HCT116 (cell line): ENCODE measurements at regions of chr10 and their contacts with region 1.

Region 1: GRCh38 chr10:106175760-106176377 is 988.6 kb downstream of the SORCS1 start:
- DNase-seq: no peak
- ATAC-seq: no peak
- H3K4me3 ChIP-seq: no peak overlapping the region
- H3K27ac ChIP-seq: no peak overlapping the region
- H3K4me1 ChIP-seq: no peaks in the 10 kb centered on the region
- H3K27me3 ChIP-seq: no peaks in the 10 kb centered on the region
- CTCF ChIP-seq: peak in 2 of 3 experiments; percentile 32 to 50; a peak in 3 of 6 replicates
- POLR2A ChIP-seq: no peak
- RAD21 ChIP-seq: peak; percentile 46

Region 2: DNA sequence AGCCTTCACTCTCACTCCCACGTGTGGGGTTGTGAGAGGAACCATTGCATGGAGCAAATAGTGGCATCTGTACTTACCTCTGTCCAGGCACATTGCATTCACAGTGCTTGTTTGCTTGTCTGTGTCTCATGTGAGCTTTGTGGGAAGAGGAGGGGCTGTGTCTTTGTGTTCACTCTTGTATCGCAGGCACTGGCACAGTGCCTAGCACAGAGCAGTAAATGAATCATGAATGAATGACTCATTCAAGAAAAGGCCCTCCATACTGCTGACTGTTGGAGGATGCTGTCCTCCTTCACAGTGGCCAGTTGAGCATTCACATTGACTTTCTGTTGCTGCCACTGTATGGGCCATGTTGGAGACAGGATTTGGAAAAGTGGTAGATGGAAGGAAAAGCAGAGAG is 1409.5 kb before region 1 on chr10:
- CTCF ChIA-PET with region 1: no interaction called
- POLR2A ChIA-PET with region 1: no interaction called
- RAD21 ChIA-PET with region 1: no interaction called
- intact Hi-C with region 1: loop called (anchors 2 kb)
- DNase-seq: peak; percentile 67
- ATAC-seq: peak; percentile 90
- H3K4me3 ChIP-seq: no peak overlapping the region
- H3K27ac ChIP-seq: no peak overlapping the region
- H3K4me1 ChIP-seq: peaks cover 0 to 13% of the 10 kb centered on the region in 2 experiments; a peak in 2 of 4 replicates
- H3K27me3 ChIP-seq: peaks cover 45% of the 10 kb centered on the region
- CTCF ChIP-seq: no peak
- POLR2A ChIP-seq: no peak
- RAD21 ChIP-seq: no peak

Region 3: DNA sequence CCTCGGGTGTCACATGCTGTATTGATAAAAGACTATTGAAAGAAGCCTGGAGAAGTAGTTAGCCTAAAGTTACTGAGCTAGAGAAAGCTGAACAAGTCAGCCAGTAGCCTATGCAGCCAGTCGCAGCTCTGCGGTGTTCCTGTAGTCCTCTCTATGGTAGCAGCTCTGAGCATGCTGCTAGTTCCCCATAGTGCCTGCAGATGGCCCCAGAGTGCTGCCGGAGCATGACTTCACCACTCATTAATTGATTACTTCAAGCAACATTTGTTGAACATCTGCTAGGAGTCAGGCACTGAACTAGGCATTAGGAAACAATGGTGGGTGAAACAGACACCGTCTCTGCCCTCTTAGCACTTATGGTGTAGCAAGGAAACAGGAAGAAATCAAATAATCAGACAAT is 1112.1 kb before region 1 on chr10:
- CTCF ChIA-PET with region 1: no interaction called
- POLR2A ChIA-PET with region 1: no interaction called
- RAD21 ChIA-PET with region 1: no interaction called
- intact Hi-C with region 1: loop called (anchors 1 kb)
- DNase-seq: peak; percentile 2
- ATAC-seq: peak; percentile 86
- H3K4me3 ChIP-seq: no peak overlapping the region
- H3K27ac ChIP-seq: no peak overlapping the region
- H3K4me1 ChIP-seq: no peaks in the 10 kb centered on the region
- H3K27me3 ChIP-seq: peaks cover 6% of the 10 kb centered on the region; the same call in 1 of the 2 replicates
- CTCF ChIP-seq: peak; percentile 12 to 84 (median 83); a peak in 4 of 6 replicates
- POLR2A ChIP-seq: no peak
- RAD21 ChIP-seq: peak; percentile 66

Region 4: DNA sequence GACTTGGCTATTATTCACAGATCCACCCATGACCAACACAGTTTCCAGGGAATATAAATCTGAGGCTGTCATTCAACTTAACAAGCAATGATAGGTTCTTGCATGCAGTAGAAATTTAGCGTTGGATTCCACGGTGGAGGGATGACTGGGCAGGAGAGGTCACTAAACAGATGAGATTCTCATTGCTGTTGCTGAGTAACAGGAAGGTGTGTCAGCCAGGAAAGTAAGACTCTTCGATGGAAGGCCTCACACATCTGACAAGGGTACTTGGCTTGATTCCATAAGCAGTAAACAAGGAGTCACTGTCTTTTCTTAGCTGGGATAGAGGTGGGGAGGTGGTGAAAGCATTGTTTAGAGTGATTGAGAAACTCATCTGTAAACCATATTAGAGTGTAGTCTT is 382.8 kb before region 1 on chr10:
- CTCF ChIA-PET with region 1: no interaction called
- POLR2A ChIA-PET with region 1: no interaction called
- RAD21 ChIA-PET with region 1: no interaction called
- intact Hi-C with region 1: no loop called
- DNase-seq: no peak
- ATAC-seq: no peak
- H3K4me3 ChIP-seq: no peak overlapping the region
- H3K27ac ChIP-seq: no peak overlapping the region
- H3K4me1 ChIP-seq: no peaks in the 10 kb centered on the region
- H3K27me3 ChIP-seq: no peaks in the 10 kb centered on the region
- CTCF ChIP-seq: no peak
- POLR2A ChIP-seq: no peak
- RAD21 ChIP-seq: no peak

Region 5: GRCh38 chr10:105950410-105950809 is 225.5 kb before region 1 on chr10:
- CTCF ChIA-PET with region 1: no interaction called
- POLR2A ChIA-PET with region 1: no interaction called
- RAD21 ChIA-PET with region 1: no interaction called
- intact Hi-C with region 1: loop called (anchors 2 kb)
- DNase-seq: no peak
- ATAC-seq: peak; percentile 65; the same call in 1 of the 2 replicates
- H3K4me3 ChIP-seq: no peak overlapping the region
- H3K27ac ChIP-seq: no peak overlapping the region
- H3K4me1 ChIP-seq: no peaks in the 10 kb centered on the region
- H3K27me3 ChIP-seq: no peaks in the 10 kb centered on the region
- CTCF ChIP-seq: peak in 2 of 3 experiments; percentile 81 to 86; a peak in 4 of 6 replicates
- POLR2A ChIP-seq: no peak
- RAD21 ChIP-seq: peak; percentile 48

Region 6: DNA sequence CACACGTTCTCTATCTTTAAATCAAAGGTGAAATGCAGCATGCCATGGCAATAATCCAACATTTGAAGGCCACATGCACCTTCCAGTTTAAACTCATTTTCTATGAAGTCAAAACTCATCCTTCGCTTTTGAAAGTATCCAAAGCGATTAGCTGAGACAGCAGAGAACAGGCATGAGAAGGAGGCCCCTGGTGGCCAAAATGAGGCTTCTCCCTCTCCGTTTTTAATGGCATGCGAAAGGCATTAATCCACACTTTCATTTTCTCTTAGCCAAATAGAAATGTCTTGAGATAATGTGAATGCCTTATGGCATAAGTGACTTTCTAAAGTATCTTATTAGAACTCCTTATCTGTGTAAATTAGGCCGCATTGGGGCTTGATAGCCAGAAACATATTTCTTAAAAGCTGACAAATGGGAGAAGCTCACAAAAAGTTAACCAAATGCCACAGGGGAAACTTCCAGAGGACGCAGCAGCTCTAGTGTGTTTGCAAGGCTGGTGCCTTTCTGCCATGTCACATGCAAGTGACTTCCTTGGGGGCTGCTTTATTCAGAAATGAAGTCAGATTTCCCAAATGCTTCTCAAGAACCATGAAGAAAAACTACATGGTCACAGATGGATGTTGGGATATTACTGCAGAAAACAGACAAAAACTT is 200.9 kb before region 1 on chr10:
- CTCF ChIA-PET with region 1: no interaction called
- POLR2A ChIA-PET with region 1: no interaction called
- RAD21 ChIA-PET with region 1: no interaction called
- intact Hi-C with region 1: no loop called
- DNase-seq: no peak
- ATAC-seq: no peak
- H3K4me3 ChIP-seq: no peak overlapping the region
- H3K27ac ChIP-seq: no peak overlapping the region
- H3K4me1 ChIP-seq: no peaks in the 10 kb centered on the region
- H3K27me3 ChIP-seq: no peaks in the 10 kb centered on the region
- CTCF ChIP-seq: peak in 1 of 3 experiments; percentile 12; a peak in 1 of 6 replicates
- POLR2A ChIP-seq: no peak
- RAD21 ChIP-seq: no peak

Region 7: GRCh38 chr10:106107706-106108105 is 68.2 kb before region 1 on chr10:
- CTCF ChIA-PET with region 1: no interaction called
- POLR2A ChIA-PET with region 1: no interaction called
- RAD21 ChIA-PET with region 1: no interaction called
- intact Hi-C with region 1: no loop called
- DNase-seq: no peak
- ATAC-seq: no peak
- H3K4me3 ChIP-seq: no peak overlapping the region
- H3K27ac ChIP-seq: no peak overlapping the region
- H3K4me1 ChIP-seq: no peaks in the 10 kb centered on the region
- H3K27me3 ChIP-seq: no peaks in the 10 kb centered on the region
- CTCF ChIP-seq: no peak
- POLR2A ChIP-seq: no peak
- RAD21 ChIP-seq: no peak

Region 8: GRCh38 chr10:106440355-106440754 is 264.5 kb after region 1 on chr10:
- CTCF ChIA-PET with region 1: no interaction called
- POLR2A ChIA-PET with region 1: no interaction called
- RAD21 ChIA-PET with region 1: no interaction called
- intact Hi-C with region 1: no loop called
- DNase-seq: no peak
- ATAC-seq: no peak
- H3K4me3 ChIP-seq: no peak overlapping the region
- H3K27ac ChIP-seq: no peak overlapping the region
- H3K4me1 ChIP-seq: no peaks in the 10 kb centered on the region
- H3K27me3 ChIP-seq: no peaks in the 10 kb centered on the region
- CTCF ChIP-seq: no peak
- POLR2A ChIP-seq: no peak
- RAD21 ChIP-seq: no peak